PC-3 (cell line): ENCODE measurements at regions of chr3 and their contacts with region 1.

Region 1: GRCh38 chr3:120693439-120694186 is 11.6 kb upstream of the HGD start:
- DNase-seq: peak; percentile 83
- ATAC-seq: peak; percentile 97
- H3K4me3 ChIP-seq: no peak overlapping the region
- H3K27ac ChIP-seq: peak overlapping the region; percentile 47
- H3K4me1 ChIP-seq: peaks cover 9% of the 10 kb centered on the region
- H3K27me3 ChIP-seq: no peaks in the 10 kb centered on the region
- CTCF ChIP-seq: no peak

Region 2: GRCh38 chr3:120567370-120568201 is 126.0 kb before region 1 on chr3:
- CTCF ChIA-PET with region 1: no interaction called
- POLR2A ChIA-PET with region 1: no interaction called
- intact Hi-C with region 1: loop called (anchors 5 kb)
- DNase-seq: peak; percentile 70
- ATAC-seq: peak; percentile 86
- H3K4me3 ChIP-seq: peak overlapping the region; percentile 65
- H3K27ac ChIP-seq: no peak overlapping the region
- H3K4me1 ChIP-seq: peaks cover 9% of the 10 kb centered on the region; the same call in 1 of the 2 replicates
- H3K27me3 ChIP-seq: no peaks in the 10 kb centered on the region
- CTCF ChIP-seq: peak; percentile 86

Region 3: GRCh38 chr3:120622870-120623731 is 70.5 kb before region 1 on chr3:
- CTCF ChIA-PET with region 1: interaction called, 4 read pairs
- POLR2A ChIA-PET with region 1: no interaction called
- intact Hi-C with region 1: loop called (anchors 1 kb)
- DNase-seq: peak; percentile 98
- ATAC-seq: peak; percentile 94
- H3K4me3 ChIP-seq: peak overlapping the region; percentile 16
- H3K27ac ChIP-seq: peak overlapping the region; percentile 90
- H3K4me1 ChIP-seq: peaks cover 28% of the 10 kb centered on the region
- H3K27me3 ChIP-seq: no peaks in the 10 kb centered on the region
- CTCF ChIP-seq: peak; percentile 81

Region 4: GRCh38 chr3:120705851-120706582 is 12.4 kb after region 1 on chr3:
- CTCF ChIA-PET with region 1: no interaction called
- POLR2A ChIA-PET with region 1: no interaction called
- intact Hi-C with region 1: loop called (anchors 1 kb)
- DNase-seq: peak; percentile 36
- ATAC-seq: peak; percentile 87
- H3K4me3 ChIP-seq: no peak overlapping the region
- H3K27ac ChIP-seq: peak overlapping the region; percentile 39
- H3K4me1 ChIP-seq: no peaks in the 10 kb centered on the region; the same call in 1 of the 2 replicates
- H3K27me3 ChIP-seq: no peaks in the 10 kb centered on the region
- CTCF ChIP-seq: no peak

Region 5: DNA sequence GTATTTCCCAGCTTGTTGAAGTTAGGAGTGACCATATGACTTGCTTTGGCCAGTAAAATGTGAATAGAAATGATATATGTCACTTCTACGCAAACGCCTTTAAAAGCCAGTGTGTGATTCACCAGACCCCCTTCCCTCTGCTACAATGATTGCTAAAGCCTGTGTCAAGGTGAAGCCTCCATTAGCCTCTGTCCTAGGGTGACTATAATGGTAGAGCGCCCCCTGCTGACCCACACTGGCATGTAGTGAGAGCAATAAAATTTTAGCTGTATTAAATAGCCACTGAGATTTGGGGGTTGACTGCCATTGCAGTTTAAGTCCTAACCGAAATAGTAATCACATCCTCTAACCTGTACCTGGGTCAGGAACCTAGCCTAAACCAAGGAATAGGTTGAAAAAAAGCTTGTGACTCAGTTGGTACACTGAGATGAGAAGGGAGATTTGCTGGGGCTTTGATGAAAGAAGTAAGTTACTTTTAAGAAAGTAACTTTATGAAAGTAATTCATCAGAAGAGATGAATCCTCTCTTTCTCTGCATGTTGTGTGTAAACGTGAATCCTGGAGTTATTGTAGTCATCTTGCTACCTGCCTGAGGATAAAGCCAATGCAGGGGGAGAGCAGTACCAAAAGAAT is 101.5 kb after region 1 on chr3:
- CTCF ChIA-PET with region 1: no interaction called
- POLR2A ChIA-PET with region 1: no interaction called
- intact Hi-C with region 1: loop called (anchors 1 kb)
- DNase-seq: peak; percentile 93
- ATAC-seq: peak; percentile 65
- H3K4me3 ChIP-seq: no peak overlapping the region
- H3K27ac ChIP-seq: 0 out of 2 replicates have a peak overlapping the region, but pooled peaks have one; percentile 3
- H3K4me1 ChIP-seq: peaks cover 28% of the 10 kb centered on the region
- H3K27me3 ChIP-seq: no peaks in the 10 kb centered on the region
- CTCF ChIP-seq: peak; percentile 99